GM10248 (cell line): ENCODE measurements at regions of chr12 and their contacts with region 1.

Region 1: GRCh38 chr12:122500685-122501488 is at the start of gene ZCCHC8:
- DNase-seq: peak; percentile 94
- CTCF ChIP-seq: peak; percentile 30

Region 2: DNA sequence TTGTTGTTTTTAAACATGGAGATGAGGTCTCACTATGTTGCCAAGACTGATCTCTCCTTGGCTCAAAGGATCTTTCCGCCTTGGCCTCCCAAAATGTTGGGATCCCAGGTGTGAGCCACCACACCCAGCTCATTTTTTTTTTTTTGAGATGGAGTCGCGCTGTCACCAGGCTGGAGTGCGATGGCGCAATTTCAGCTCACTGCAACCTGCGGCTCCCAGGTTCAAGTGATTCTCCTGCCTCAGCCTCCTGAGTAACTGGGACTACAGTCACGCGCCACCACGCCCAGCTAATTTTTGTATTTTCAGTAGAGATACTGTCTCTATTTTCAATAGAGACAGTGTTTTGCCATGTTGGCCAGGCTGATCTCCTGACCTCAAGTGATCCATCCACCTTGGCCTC is 73.5 kb before region 1 on chr12:
- CTCF ChIA-PET with region 1: no interaction called
- POLR2A ChIA-PET with region 1: no interaction called
- DNase-seq: no peak
- CTCF ChIP-seq: no peak

Region 3: GRCh38 chr12:122486805-122487426 is 14.0 kb before region 1 on chr12:
- CTCF ChIA-PET with region 1: interaction called, 10 read pairs
- POLR2A ChIA-PET with region 1: interaction called, 15 read pairs
- DNase-seq: no peak
- CTCF ChIP-seq: no peak

Region 4: GRCh38 chr12:122517877-122518276 is 17.0 kb after region 1 on chr12:
- CTCF ChIA-PET with region 1: interaction called, 22 read pairs
- POLR2A ChIA-PET with region 1: interaction called, 18 read pairs
- DNase-seq: no peak
- CTCF ChIP-seq: no peak

Region 5: GRCh38 chr12:122526683-122527477 is 26.0 kb after region 1 on chr12 and contains the starts of genes KNTC1 and RSRC2:
- CTCF ChIA-PET with region 1: interaction called, 3 read pairs
- POLR2A ChIA-PET with region 1: interaction called, 20 read pairs
- DNase-seq: peak; percentile 97
- CTCF ChIP-seq: no peak

Region 6: GRCh38 chr12:122732170-122732569 is 231.3 kb after region 1 on chr12:
- CTCF ChIA-PET with region 1: no interaction called
- POLR2A ChIA-PET with region 1: no interaction called
- DNase-seq: no peak
- CTCF ChIP-seq: no peak